Psoas muscle (tissue), 8 donors: ENCODE measurements at regions of chr9 and their contacts with region 1.

Region 1: DNA sequence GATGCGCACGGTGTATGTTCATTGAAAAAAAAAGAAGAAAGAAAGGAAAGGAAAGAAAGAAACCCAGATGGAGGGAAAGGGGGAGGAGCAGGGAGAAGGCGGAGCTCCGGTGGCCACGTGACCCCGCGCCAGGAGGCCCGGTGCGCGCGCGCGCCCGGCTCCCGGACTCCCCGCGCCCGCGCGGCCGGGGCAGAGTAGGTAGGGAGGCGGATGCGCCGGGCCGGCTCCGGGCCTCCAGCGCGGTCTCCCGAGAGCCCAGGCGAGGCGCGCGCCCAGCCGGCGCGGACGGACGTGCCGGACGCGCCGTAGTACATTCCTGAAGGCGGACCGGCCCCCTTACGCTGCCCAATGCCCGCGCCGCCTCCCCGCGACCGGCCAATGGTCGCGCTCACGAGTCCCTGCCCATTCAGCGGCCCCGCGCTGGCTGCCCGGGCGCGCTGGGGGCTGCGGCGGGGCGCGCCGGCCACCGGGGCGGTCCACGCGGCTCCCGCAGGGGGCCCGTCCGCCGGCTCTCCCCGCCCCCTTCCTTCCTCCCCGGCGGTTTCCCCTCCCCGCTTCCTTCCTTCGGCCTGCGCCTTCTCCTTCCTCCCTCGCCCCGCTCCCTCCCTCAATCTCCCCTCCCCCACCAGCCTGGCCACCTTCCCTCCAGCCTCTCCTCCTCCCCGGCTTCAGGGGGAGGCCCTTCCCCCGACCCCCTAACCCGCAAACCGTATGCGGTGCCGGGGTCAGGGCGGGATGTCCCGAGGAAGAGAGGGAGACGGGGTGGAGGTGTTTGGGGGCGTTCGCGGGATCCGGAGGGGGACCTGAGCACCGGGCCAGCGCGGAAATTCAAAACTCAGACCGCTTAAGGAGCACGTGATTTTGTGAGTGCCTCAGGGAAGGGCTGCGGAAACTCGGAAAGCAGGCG is 5.8 kb downstream of the PTCH1 start:
- DNase-seq: peak; percentile 89 to 94
- ATAC-seq: peak; percentile 79 to 88 (median 88)
- H3K4me3 ChIP-seq: peak overlapping the region; percentile 87
- H3K27ac ChIP-seq: peak overlapping the region; percentile 88
- H3K4me1 ChIP-seq: peaks cover 6% of the 10 kb centered on the region
- H3K27me3 ChIP-seq: peaks cover 0 to 9% (median 3%) of the 10 kb centered on the region in 3 donors
- CTCF ChIP-seq: no peak

Region 2: DNA sequence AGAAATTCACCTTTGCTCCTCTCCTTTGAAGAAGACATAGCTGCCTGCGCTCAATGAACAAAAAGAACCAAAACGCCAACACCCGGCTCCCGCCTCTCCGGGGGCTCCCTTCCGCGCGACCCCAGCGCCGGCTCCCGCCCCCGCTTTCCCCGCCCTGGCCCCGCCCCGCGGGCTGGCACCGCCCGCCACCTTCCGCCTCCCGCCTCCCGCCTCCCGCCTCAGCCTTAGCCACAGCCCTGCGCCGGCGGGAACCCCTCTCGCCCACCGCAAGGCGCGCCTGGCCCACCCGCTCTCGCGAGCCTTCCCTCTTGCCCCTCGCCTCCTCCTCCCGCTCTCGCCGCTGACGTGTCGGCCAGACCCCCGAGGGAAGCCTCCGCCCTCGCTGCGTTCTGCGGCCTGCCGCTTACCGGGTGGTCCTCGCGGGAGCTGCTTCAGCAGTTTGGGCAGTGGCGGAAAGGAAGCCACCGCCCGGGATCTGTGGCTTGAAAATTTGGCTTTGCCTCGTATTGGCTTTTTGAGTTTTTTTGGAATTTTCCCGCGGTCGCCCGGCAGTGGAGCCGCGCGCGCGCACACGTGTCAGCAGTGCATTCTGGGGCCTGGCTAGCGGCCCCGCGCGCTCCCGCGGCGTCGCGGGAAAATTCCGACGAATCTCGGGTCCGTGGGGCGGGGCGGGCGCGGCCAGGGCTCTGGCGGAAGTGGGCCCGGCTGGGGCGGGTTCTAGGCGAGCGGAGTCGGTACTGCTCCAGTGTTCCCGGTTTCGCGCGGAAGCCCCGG is 193.7 kb before region 1 on chr9 and contains the start of gene FANCC:
- intact Hi-C with region 1: loop called (anchors 5 to 10 kb)
- DNase-seq: peak; percentile 94 to 95
- ATAC-seq: peak; percentile 91 to 96 (median 92)
- H3K4me3 ChIP-seq: peak within 1 kb of the TSS; percentile 100
- H3K27ac ChIP-seq: peak within 1 kb of the TSS; percentile 95
- H3K4me1 ChIP-seq: peaks cover 9% of the 10 kb centered on the region
- H3K27me3 ChIP-seq: no peaks in the 10 kb centered on the region
- CTCF ChIP-seq: no peak
- total RNA-seq, gene FANCC: 2.1 to 5.2 (median 4.2) TPM

Region 3: GRCh38 chr9:95425910-95426551 is 84.9 kb before region 1 on chr9:
- intact Hi-C with region 1: loop called in 1 of 2 experiments (anchors 5 kb)
- DNase-seq: no peak
- ATAC-seq: peak in 3 of 4 donors; percentile 24 to 57 (median 40)
- H3K4me3 ChIP-seq: peak overlapping the region; percentile 65
- H3K27ac ChIP-seq: peak overlapping the region; percentile 88
- H3K4me1 ChIP-seq: no peaks in the 10 kb centered on the region
- H3K27me3 ChIP-seq: no peaks in the 10 kb centered on the region
- CTCF ChIP-seq: no peak

Region 4: DNA sequence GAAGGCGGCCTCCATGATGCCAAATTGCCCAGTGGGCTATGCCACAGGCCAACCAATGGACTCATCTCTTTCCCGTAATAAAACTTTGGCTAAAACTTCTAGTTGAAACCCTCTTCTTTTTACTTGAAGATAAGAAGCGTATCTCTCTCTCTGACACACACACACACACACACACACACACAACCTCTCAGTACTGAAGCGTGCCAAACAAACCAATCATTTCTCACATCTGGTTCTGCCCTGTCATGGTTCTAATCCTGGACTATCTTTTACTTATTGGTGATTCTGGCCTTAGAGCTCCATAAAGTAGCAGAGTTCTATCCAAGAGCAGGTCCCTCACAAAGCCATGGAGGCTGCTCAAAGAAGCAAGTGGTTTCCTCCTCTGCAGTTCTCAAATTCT is 58.8 kb before region 1 on chr9:
- intact Hi-C with region 1: no loop called
- DNase-seq: no peak
- ATAC-seq: no peak
- H3K4me3 ChIP-seq: no peak overlapping the region
- H3K27ac ChIP-seq: no peak overlapping the region
- H3K4me1 ChIP-seq: no peaks in the 10 kb centered on the region
- H3K27me3 ChIP-seq: no peaks in the 10 kb centered on the region
- CTCF ChIP-seq: no peak

Region 5: GRCh38 chr9:95462249-95463147 is 48.5 kb before region 1 on chr9:
- intact Hi-C with region 1: loop called in 1 of 2 experiments (anchors 2 kb)
- DNase-seq: peak; percentile 42 to 69
- ATAC-seq: peak; percentile 58 to 81 (median 71)
- H3K4me3 ChIP-seq: peak overlapping the region; percentile 43
- H3K27ac ChIP-seq: no peak overlapping the region
- H3K4me1 ChIP-seq: peaks cover 9% of the 10 kb centered on the region
- H3K27me3 ChIP-seq: no peaks in the 10 kb centered on the region
- CTCF ChIP-seq: no peak

Region 6: DNA sequence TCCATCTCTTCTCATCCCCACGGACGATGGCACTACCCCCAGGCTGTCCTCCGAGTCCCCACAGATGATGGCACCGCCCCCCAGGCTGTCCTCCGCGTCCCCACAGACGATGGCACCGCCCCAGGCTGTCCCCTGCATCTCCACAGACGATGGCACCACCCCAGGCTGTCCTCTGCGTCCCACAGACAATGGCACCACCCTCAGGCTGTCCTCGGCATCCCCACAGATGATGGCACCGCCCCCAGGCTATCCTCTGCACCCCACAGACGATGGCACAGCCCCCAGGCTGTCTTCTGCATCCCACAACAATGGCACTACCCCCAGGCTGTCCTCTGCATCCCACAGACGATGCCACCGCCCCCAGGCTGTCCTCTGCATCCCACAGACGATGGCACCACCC is 63.2 kb after region 1 on chr9:
- intact Hi-C with region 1: loop called in 1 of 2 experiments (anchors 5 kb)
- DNase-seq: no peak
- ATAC-seq: no peak
- H3K4me3 ChIP-seq: no peak overlapping the region
- H3K27ac ChIP-seq: no peak overlapping the region
- H3K4me1 ChIP-seq: no peaks in the 10 kb centered on the region
- H3K27me3 ChIP-seq: peaks cover 0 to 43% (median 4%) of the 10 kb centered on the region in 3 donors
- CTCF ChIP-seq: no peak

Region 7: GRCh38 chr9:95641586-95641985 is 130.6 kb after region 1 on chr9:
- intact Hi-C with region 1: no loop called
- DNase-seq: no peak
- ATAC-seq: no peak
- H3K4me3 ChIP-seq: no peak overlapping the region
- H3K27ac ChIP-seq: no peak overlapping the region
- H3K4me1 ChIP-seq: no peaks in the 10 kb centered on the region
- H3K27me3 ChIP-seq: no peaks in the 10 kb centered on the region
- CTCF ChIP-seq: no peak

Region 8: GRCh38 chr9:95875305-95876137 is 364.6 kb after region 1 on chr9 and contains the start of gene ERCC6L2:
- intact Hi-C with region 1: loop called in 1 of 2 experiments (anchors 1 kb)
- DNase-seq: peak; percentile 94 to 96
- ATAC-seq: peak; percentile 96 to 97 (median 97)
- H3K4me3 ChIP-seq: no peak within 1 kb of the TSS
- H3K27ac ChIP-seq: peak within 1 kb of the TSS; percentile 100
- H3K4me1 ChIP-seq: peaks cover 22% of the 10 kb centered on the region
- H3K27me3 ChIP-seq: no peaks in the 10 kb centered on the region
- CTCF ChIP-seq: no peak
- total RNA-seq, gene ERCC6L2: 19.8 to 27.1 (median 20.6) TPM